Thyroid gland (tissue), 4 donors: ENCODE measurements at regions of chr7 and their contacts with region 1.

Region 1: GRCh38 chr7:33109005-33109757 is at the start of gene RP9:
- DNase-seq: peak; percentile 65 to 69
- H3K4me3 ChIP-seq: peak within 1 kb of the TSS; percentile 2 to 97 (median 96)
- H3K27ac ChIP-seq: peak within 1 kb of the TSS; percentile 84 to 93 (median 87)
- H3K4me1 ChIP-seq: peaks cover 20 to 34% of the 10 kb centered on the region in 2 donors
- H3K27me3 ChIP-seq: no peaks in the 10 kb centered on the region
- CTCF ChIP-seq: peak in 5 of 6 experiments; percentile 11 to 89 (median 67)
- POLR2A ChIP-seq: peak in 1 of 2 donors; percentile 71
- total RNA-seq, gene RP9: 8.7 to 23.5 (median 12.8) TPM

Region 2: GRCh38 chr7:32881074-32882017 is 227.8 kb before region 1 on chr7:
- intact Hi-C with region 1: loop called (anchors 10 kb)
- DNase-seq: no peak
- H3K4me3 ChIP-seq: no peak overlapping the region
- H3K27ac ChIP-seq: no peak overlapping the region
- H3K4me1 ChIP-seq: peaks cover 21 to 38% of the 10 kb centered on the region in 2 donors
- H3K27me3 ChIP-seq: no peaks in the 10 kb centered on the region
- CTCF ChIP-seq: no peak
- POLR2A ChIP-seq: no peak

Region 3: GRCh38 chr7:33250421-33250871 is 141.3 kb after region 1 on chr7:
- intact Hi-C with region 1: no loop called
- DNase-seq: no peak
- H3K4me3 ChIP-seq: no peak overlapping the region
- H3K27ac ChIP-seq: no peak overlapping the region
- H3K4me1 ChIP-seq: no peaks in the 10 kb centered on the region
- H3K27me3 ChIP-seq: no peaks in the 10 kb centered on the region
- CTCF ChIP-seq: no peak
- POLR2A ChIP-seq: no peak

Region 4: DNA sequence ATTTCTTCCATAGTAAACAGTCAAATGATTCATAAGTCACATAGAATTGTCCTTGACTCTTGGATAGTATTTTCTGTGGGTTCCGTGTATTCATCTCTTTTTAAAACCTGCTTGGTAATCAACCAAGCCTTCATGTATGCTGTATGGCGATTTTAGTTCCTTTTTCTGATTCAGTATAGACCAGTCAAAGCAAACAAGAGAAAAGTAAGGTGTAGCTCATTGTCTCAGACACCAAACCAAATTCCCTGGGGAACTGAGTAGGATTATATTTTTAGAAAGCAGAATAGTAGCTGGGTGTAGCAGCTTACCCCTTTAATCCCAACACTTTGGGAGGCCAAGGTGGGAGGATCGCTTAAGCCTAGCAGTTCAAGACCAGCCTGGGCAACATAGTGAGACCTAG is 260.7 kb after region 1 on chr7:
- intact Hi-C with region 1: no loop called
- DNase-seq: no peak
- H3K4me3 ChIP-seq: no peak overlapping the region
- H3K27ac ChIP-seq: no peak overlapping the region
- H3K4me1 ChIP-seq: no peaks in the 10 kb centered on the region
- H3K27me3 ChIP-seq: no peaks in the 10 kb centered on the region
- CTCF ChIP-seq: no peak
- POLR2A ChIP-seq: no peak